SK-N-SH (cell line): ENCODE measurements at regions of chr18 and their contacts with region 1.

Region 1: DNA sequence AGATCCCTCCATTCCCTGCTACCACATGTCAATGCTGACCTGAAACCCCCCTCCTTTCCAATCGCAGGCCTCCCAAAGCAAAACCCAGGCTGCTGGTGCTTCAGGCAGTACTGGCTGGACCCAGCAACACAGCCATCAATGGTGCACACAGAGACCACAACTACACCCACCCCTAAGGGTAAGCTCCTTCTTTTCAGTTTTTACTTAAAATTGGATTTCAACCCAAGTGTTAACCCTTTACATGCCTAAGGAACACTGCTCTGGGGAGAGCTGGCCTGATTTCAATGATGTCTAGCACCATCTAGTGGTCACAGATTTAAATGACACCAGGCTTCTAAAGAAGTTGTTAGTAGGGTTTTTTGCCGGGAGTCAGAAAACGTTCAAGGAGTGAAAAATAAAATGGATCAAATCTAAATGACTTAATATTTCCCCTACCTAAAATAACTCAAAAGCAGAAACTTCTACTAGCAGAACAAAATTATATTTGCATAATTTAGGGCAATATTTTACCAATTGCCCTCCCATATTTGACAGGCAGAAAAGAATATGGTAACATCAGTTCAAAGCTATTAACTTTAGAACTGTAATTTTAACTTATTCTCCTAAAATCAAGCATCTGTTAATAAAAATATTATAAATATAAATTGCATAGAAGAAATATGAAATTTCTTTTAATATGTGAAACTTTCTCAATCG is 24.6 kb downstream of the FECH start:
- DNase-seq: peak; percentile 68
- H3K4me3 ChIP-seq: peak overlapping the region in 1 of 2 experiments; percentile 28; a peak in 1 of 4 replicates
- H3K27ac ChIP-seq: no peak overlapping the region
- H3K4me1 ChIP-seq: peaks cover 0 to 3% of the 10 kb centered on the region in 2 experiments; a peak in 1 of 4 replicates
- H3K27me3 ChIP-seq: no peaks in the 10 kb centered on the region
- CTCF ChIP-seq: peak; percentile 94
- EP300 ChIP-seq: no peak
- RAD21 ChIP-seq: peak; percentile 80

Region 2: DNA sequence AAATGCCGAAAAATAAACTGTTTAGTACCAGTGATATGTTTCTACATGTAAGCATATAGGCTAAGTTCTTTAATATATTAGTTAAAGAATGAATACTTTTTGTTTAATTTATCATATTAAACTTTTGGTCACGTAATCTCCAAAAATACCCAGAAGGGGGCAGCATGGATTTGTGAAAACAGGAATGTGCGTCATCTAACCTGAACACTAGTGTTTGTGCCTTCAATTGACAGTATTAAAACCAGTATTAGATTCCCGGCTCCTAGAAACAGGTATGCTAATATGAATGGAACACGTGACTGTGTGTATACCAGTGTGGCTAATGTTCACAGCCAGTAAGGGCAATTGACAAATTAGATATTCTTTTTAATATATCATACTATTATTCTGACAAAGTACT is 858.9 kb before region 1 on chr18:
- CTCF ChIA-PET with region 1: interaction called, 16 read pairs
- POLR2A ChIA-PET with region 1: interaction called, 5 read pairs
- DNase-seq: peak; percentile 54
- H3K4me3 ChIP-seq: no peak overlapping the region
- H3K27ac ChIP-seq: no peak overlapping the region
- H3K4me1 ChIP-seq: no peaks in the 10 kb centered on the region
- H3K27me3 ChIP-seq: no peaks in the 10 kb centered on the region
- CTCF ChIP-seq: peak; percentile 65
- EP300 ChIP-seq: no peak
- RAD21 ChIP-seq: peak; percentile 73

Region 3: DNA sequence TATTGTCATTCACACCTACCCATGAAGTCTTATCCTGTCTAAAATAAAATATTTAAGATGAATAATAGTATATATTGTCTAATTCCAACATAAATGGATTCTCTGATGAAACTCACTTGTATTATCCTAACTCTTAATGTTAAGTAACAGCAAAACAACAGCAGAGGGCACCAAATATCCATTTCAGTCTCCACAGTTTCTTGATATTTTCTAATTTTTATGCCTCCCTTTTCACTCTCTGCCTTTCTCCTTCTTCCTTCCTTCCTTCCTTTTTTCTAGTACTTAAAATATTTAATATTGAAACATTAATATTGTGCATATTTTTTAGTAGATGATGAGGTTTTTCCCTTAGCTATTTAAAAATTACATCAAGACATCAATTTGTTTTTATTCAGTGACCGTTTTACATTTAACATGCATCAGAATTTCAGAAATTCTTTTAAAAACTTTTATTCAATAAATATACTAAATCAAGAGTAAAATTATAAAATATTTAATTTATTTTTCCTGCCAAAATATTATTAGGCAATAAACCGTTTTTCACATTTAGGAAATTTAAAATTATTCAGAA is 813.1 kb before region 1 on chr18:
- CTCF ChIA-PET with region 1: interaction called, 63 read pairs
- POLR2A ChIA-PET with region 1: no interaction called
- DNase-seq: peak; percentile 43
- H3K4me3 ChIP-seq: no peak overlapping the region
- H3K27ac ChIP-seq: no peak overlapping the region
- H3K4me1 ChIP-seq: no peaks in the 10 kb centered on the region
- H3K27me3 ChIP-seq: no peaks in the 10 kb centered on the region
- CTCF ChIP-seq: peak; percentile 81
- EP300 ChIP-seq: no peak
- RAD21 ChIP-seq: peak; percentile 90

Region 4: GRCh38 chr18:57547260-57547659 is 14.6 kb before region 1 on chr18:
- CTCF ChIA-PET with region 1: interaction called, 10 read pairs
- POLR2A ChIA-PET with region 1: interaction called, 3 read pairs
- DNase-seq: no peak
- H3K4me3 ChIP-seq: no peak overlapping the region
- H3K27ac ChIP-seq: no peak overlapping the region
- H3K4me1 ChIP-seq: peaks cover 6 to 10% of the 10 kb centered on the region in 2 experiments; a peak in 2 of 4 replicates
- H3K27me3 ChIP-seq: no peaks in the 10 kb centered on the region
- CTCF ChIP-seq: no peak
- EP300 ChIP-seq: no peak
- RAD21 ChIP-seq: no peak

Region 5: GRCh38 chr18:57576316-57576715 is 14.4 kb after region 1 on chr18:
- CTCF ChIA-PET with region 1: interaction called, 15 read pairs
- POLR2A ChIA-PET with region 1: no interaction called
- DNase-seq: no peak
- H3K4me3 ChIP-seq: no peak overlapping the region
- H3K27ac ChIP-seq: no peak overlapping the region
- H3K4me1 ChIP-seq: peaks cover 0 to 4% of the 10 kb centered on the region in 2 experiments; a peak in 1 of 4 replicates
- H3K27me3 ChIP-seq: no peaks in the 10 kb centered on the region
- CTCF ChIP-seq: no peak
- EP300 ChIP-seq: no peak
- RAD21 ChIP-seq: no peak

Region 6: DNA sequence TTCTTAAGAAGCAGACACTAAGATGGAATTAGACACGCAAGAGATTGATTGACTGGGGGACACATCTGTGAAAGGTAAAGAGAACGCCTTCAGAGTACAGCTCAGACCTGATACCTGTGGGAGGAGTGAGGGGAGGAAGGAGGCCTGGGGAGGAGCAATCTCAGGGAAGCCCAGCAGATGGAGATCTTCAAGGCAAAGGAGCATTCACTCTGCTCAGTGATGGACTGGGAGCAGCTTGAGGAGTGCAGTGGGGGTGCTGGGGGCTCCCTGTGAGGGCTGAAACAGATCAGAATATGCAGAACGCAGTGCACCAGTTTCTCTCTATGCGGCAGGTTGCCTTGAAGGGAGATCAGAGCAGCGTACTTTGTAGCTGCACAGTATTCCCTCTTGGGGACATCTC is 345.0 kb after region 1 on chr18:
- CTCF ChIA-PET with region 1: no interaction called
- POLR2A ChIA-PET with region 1: no interaction called
- DNase-seq: no peak
- H3K4me3 ChIP-seq: no peak overlapping the region
- H3K27ac ChIP-seq: no peak overlapping the region
- H3K4me1 ChIP-seq: no peaks in the 10 kb centered on the region; a peak in 1 of 4 replicates
- H3K27me3 ChIP-seq: no peaks in the 10 kb centered on the region
- CTCF ChIP-seq: peak; percentile 23; the same call in 1 of the 2 replicates
- EP300 ChIP-seq: no peak
- RAD21 ChIP-seq: no peak